ENCODE measurements at regions of chr10 and their contacts with region 1.

Region 1: GRCh38 chr10:29998142-29998808 is 61.1 kb downstream of the JCAD start:
- DNase-seq: peak; percentile 78
- H3K4me3 ChIP-seq: no peak overlapping the region
- H3K27ac ChIP-seq: no peak overlapping the region
- H3K4me1 ChIP-seq: no peaks in the 10 kb centered on the region
- H3K27me3 ChIP-seq: no peaks in the 10 kb centered on the region
- CTCF ChIP-seq: peak; percentile 92 to 97 (median 94)
- POLR2A ChIP-seq: no peak

Region 2: GRCh38 chr10:29926693-29927048 is 71.6 kb before region 1 on chr10:
- intact Hi-C with region 1: loop called (anchors 5 kb)
- DNase-seq: no peak
- H3K4me3 ChIP-seq: no peak overlapping the region
- H3K27ac ChIP-seq: no peak overlapping the region
- H3K4me1 ChIP-seq: no peaks in the 10 kb centered on the region
- H3K27me3 ChIP-seq: no peaks in the 10 kb centered on the region
- CTCF ChIP-seq: peak in 3 of 4 experiments; percentile 18 to 55 (median 36)
- POLR2A ChIP-seq: no peak

Region 3: GRCh38 chr10:30186371-30186875 is 188.1 kb after region 1 on chr10:
- intact Hi-C with region 1: loop called (anchors 10 kb)
- DNase-seq: no peak
- H3K4me3 ChIP-seq: no peak overlapping the region
- H3K27ac ChIP-seq: peak overlapping the region; percentile 48 to 51
- H3K4me1 ChIP-seq: peaks cover 21% of the 10 kb centered on the region
- H3K27me3 ChIP-seq: no peaks in the 10 kb centered on the region
- CTCF ChIP-seq: peak in 2 of 4 experiments; percentile 10 to 11
- POLR2A ChIP-seq: no peak

Region 4: DNA sequence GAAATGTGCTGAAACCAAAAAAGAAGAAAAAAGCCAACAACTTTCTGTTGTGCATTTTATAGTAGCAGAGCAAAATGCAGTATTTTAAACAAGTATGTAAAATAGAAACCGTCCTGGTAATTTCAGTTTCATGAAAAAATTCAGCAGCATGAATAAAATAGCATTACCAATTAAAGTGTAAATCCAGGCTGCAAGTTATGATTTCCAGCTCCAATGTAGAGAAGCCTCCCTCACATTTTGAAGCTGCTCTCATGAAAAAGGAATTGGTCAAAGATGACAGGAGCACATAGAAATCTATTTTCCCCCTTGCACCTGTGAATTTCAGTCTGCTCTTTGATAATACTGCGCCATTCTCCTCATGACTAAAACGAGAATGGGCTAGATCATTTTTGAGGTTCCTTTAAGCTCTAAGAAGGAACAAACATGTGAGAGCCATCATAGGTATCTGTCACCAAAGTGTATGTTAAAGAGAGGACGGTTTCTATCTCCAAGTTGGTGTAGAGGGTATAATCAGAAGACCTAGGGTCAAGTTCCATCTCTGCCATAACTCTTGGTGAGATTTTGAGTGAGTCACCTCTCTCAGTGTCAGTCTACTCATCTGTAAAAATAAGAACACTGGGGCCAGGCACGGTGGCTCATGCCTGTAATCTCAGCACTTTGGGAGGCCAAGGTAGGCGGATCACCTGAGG is 243.3 kb after region 1 on chr10:
- intact Hi-C with region 1: loop called (anchors 5 kb)
- DNase-seq: no peak
- H3K4me3 ChIP-seq: no peak overlapping the region
- H3K27ac ChIP-seq: no peak overlapping the region
- H3K4me1 ChIP-seq: no peaks in the 10 kb centered on the region
- H3K27me3 ChIP-seq: no peaks in the 10 kb centered on the region
- CTCF ChIP-seq: no peak
- POLR2A ChIP-seq: no peak